ENCODE measurements at regions of chr22 and their contacts with region 1.

Region 1: GRCh38 chr22:19479357-19480172 is at the start of gene CDC45:
- DNase-seq: peak; percentile 88 to 98
- ATAC-seq: peak; percentile 90 to 96 (median 90)
- H3K4me3 ChIP-seq: peak within 1 kb of the TSS; percentile 59
- H3K4me3 Mint-ChIP-seq: peak within 1 kb of the TSS; percentile 98
- H3K27ac ChIP-seq: peak within 1 kb of the TSS; percentile 98
- H3K27ac Mint-ChIP-seq: peak within 1 kb of the TSS; percentile 99
- H3K4me1 ChIP-seq: peaks cover 15% of the 10 kb centered on the region
- H3K4me1 Mint-ChIP-seq: peaks cover 28 to 42% of the 10 kb centered on the region in 2 donors
- H3K27me3 ChIP-seq: no peaks in the 10 kb centered on the region
- H3K27me3 Mint-ChIP-seq: no peaks in the 10 kb centered on the region
- CTCF ChIP-seq: no peak
- total RNA-seq, gene CDC45: 1.6 to 4.8 (median 3.3) TPM

Region 2: DNA sequence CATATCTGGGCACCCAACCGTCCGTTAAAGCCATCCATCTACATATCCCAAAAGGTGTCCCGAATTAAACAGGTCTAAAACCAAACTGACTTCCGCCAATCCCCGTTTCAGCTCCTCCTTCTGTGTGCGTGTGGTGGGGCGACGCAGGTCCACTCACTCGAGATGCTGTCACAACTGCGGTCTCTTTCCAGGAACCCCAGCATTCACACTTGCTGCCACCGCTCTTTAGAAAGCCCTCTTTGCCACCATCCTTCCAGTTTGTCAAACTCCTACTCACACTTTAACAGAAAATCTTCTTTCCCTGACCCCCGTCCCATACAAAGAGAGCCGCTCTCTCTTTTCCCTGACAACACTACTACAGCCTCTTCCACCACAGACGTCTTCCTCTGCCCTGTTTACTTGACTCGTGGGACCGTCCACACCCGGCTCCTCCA is 335.6 kb before region 1 on chr22:
- intact Hi-C with region 1: loop called (anchors 1 kb)
- DNase-seq: peak; percentile 51 to 64
- ATAC-seq: peak; percentile 38 to 52 (median 41)
- H3K4me3 ChIP-seq: peak overlapping the region; percentile 73
- H3K4me3 Mint-ChIP-seq: peak overlapping the region; percentile 100
- H3K27ac ChIP-seq: peak overlapping the region; percentile 86
- H3K27ac Mint-ChIP-seq: peak overlapping the region; percentile 99 to 100
- H3K4me1 ChIP-seq: peaks cover 14% of the 10 kb centered on the region
- H3K4me1 Mint-ChIP-seq: peaks cover 17 to 22% of the 10 kb centered on the region in 2 donors
- H3K27me3 ChIP-seq: peaks cover 5% of the 10 kb centered on the region
- H3K27me3 Mint-ChIP-seq: peaks cover 10 to 14% of the 10 kb centered on the region in 2 donors
- CTCF ChIP-seq: no peak

Region 3: GRCh38 chr22:19291580-19292457 is 187.7 kb before region 1 on chr22 and contains the start of gene CLTCL1:
- intact Hi-C with region 1: loop called (anchors 10 kb)
- DNase-seq: peak; percentile 57 to 76
- ATAC-seq: peak; percentile 78 to 84 (median 81)
- H3K4me3 ChIP-seq: peak within 1 kb of the TSS; percentile 84
- H3K4me3 Mint-ChIP-seq: peak within 1 kb of the TSS; percentile 87
- H3K27ac ChIP-seq: peak within 1 kb of the TSS; percentile 43
- H3K27ac Mint-ChIP-seq: peak within 1 kb of the TSS; percentile 41 to 75
- H3K4me1 ChIP-seq: peaks cover 18% of the 10 kb centered on the region
- H3K4me1 Mint-ChIP-seq: peaks cover 22 to 26% of the 10 kb centered on the region in 2 donors
- H3K27me3 ChIP-seq: peaks cover 22% of the 10 kb centered on the region
- H3K27me3 Mint-ChIP-seq: peaks cover 18 to 42% of the 10 kb centered on the region in 2 donors
- CTCF ChIP-seq: no peak
- total RNA-seq, gene CLTCL1: 0.86 to 1.2 (median 1.2) TPM

Region 4: DNA sequence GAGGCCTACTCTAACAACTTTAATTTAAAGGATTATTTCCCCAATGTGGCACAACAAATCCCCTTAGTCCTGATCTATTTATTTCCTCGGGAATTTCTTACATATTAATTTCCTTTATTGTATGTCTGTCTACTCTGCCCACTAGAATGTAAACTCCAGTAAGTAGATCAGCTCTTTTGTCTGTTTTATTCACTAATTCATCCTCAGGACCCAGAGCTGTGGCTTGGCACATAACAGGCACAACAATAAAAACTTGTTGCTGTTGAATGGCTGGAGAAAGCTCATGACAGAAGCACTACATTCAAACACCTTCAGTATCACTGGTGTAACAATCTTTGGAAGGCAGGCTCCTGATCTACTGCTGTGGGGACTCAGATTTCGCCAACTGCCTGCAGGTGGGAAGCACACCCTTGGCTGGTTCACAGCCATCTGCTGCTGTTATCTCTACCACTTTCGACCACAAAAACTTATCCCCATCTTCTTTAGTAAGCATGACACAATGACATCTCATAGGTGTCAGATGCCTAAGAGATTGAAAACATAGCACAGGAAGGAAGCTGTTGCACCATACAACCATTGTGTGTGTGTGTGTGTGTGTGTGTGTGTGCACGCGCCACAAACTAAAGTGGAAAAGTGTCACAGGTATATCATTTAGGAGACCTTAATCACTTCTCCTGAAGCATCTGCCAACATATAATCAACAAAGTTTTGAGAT is 59.9 kb before region 1 on chr22:
- intact Hi-C with region 1: loop called (anchors 1 kb)
- DNase-seq: peak; percentile 64 to 83
- ATAC-seq: peak; percentile 85 to 93 (median 90)
- H3K4me3 ChIP-seq: no peak overlapping the region
- H3K4me3 Mint-ChIP-seq: peak overlapping the region; percentile 87
- H3K27ac ChIP-seq: peak overlapping the region; percentile 96
- H3K27ac Mint-ChIP-seq: peak overlapping the region; percentile 87 to 100
- H3K4me1 ChIP-seq: peaks cover 71% of the 10 kb centered on the region
- H3K4me1 Mint-ChIP-seq: peaks cover 87 to 90% of the 10 kb centered on the region in 2 donors
- H3K27me3 ChIP-seq: no peaks in the 10 kb centered on the region
- H3K27me3 Mint-ChIP-seq: no peaks in the 10 kb centered on the region
- CTCF ChIP-seq: no peak

Region 5: GRCh38 chr22:19447388-19448075 is 32.0 kb before region 1 on chr22 and contains the start of gene C22orf39:
- intact Hi-C with region 1: loop called (anchors 1 kb)
- DNase-seq: peak; percentile 81 to 94
- ATAC-seq: peak; percentile 91 to 95 (median 92)
- H3K4me3 ChIP-seq: peak within 1 kb of the TSS; percentile 71
- H3K4me3 Mint-ChIP-seq: peak within 1 kb of the TSS; percentile 96
- H3K27ac ChIP-seq: peak within 1 kb of the TSS; percentile 97
- H3K27ac Mint-ChIP-seq: peak within 1 kb of the TSS; percentile 83 to 95
- H3K4me1 ChIP-seq: peaks cover 30% of the 10 kb centered on the region
- H3K4me1 Mint-ChIP-seq: peaks cover 33 to 36% of the 10 kb centered on the region in 2 donors
- H3K27me3 ChIP-seq: no peaks in the 10 kb centered on the region
- H3K27me3 Mint-ChIP-seq: no peaks in the 10 kb centered on the region
- CTCF ChIP-seq: no peak
- total RNA-seq, gene C22orf39: 45.4 to 53.3 (median 50.2) TPM

Region 6: GRCh38 chr22:19523240-19524169 is 43.9 kb after region 1 on chr22:
- intact Hi-C with region 1: no loop called
- DNase-seq: peak in 1 of 2 donors; percentile 33
- ATAC-seq: peak in 1 of 3 donors; percentile 34
- H3K4me3 ChIP-seq: no peak overlapping the region
- H3K4me3 Mint-ChIP-seq: no peak overlapping the region
- H3K27ac ChIP-seq: no peak overlapping the region
- H3K27ac Mint-ChIP-seq: no peak overlapping the region
- H3K4me1 ChIP-seq: peaks cover 5% of the 10 kb centered on the region
- H3K4me1 Mint-ChIP-seq: peaks cover 0 to 9% of the 10 kb centered on the region in 2 donors
- H3K27me3 ChIP-seq: peaks cover 11% of the 10 kb centered on the region
- H3K27me3 Mint-ChIP-seq: peaks cover 0 to 20% of the 10 kb centered on the region in 2 donors
- CTCF ChIP-seq: no peak

Region 7: GRCh38 chr22:19629720-19630419 is 150.3 kb after region 1 on chr22:
- intact Hi-C with region 1: loop called (anchors 5 kb)
- DNase-seq: peak; percentile 74 to 91
- ATAC-seq: peak; percentile 83 to 96 (median 95)
- H3K4me3 ChIP-seq: no peak overlapping the region
- H3K4me3 Mint-ChIP-seq: no peak overlapping the region
- H3K27ac ChIP-seq: no peak overlapping the region
- H3K27ac Mint-ChIP-seq: no peak overlapping the region
- H3K4me1 ChIP-seq: no peaks in the 10 kb centered on the region
- H3K4me1 Mint-ChIP-seq: peaks cover 0 to 5% of the 10 kb centered on the region in 2 donors
- H3K27me3 ChIP-seq: no peaks in the 10 kb centered on the region
- H3K27me3 Mint-ChIP-seq: no peaks in the 10 kb centered on the region
- CTCF ChIP-seq: peak; percentile 94

Measured in natural killer cell (primary cell).